ENCODE measurements at regions of chr13 and their contacts with region 1.

Region 1: GRCh38 chr13:101785858-101786257 is 333.4 kb downstream of the ITGBL1 start:
- ATAC-seq: peak in 6 of 8 experiments; percentile 52 to 100 (median 96)
- H3K4me3 ChIP-seq: no peak overlapping the region
- H3K27ac ChIP-seq: no peak overlapping the region
- H3K4me1 ChIP-seq: no peaks in the 10 kb centered on the region

Region 2: DNA sequence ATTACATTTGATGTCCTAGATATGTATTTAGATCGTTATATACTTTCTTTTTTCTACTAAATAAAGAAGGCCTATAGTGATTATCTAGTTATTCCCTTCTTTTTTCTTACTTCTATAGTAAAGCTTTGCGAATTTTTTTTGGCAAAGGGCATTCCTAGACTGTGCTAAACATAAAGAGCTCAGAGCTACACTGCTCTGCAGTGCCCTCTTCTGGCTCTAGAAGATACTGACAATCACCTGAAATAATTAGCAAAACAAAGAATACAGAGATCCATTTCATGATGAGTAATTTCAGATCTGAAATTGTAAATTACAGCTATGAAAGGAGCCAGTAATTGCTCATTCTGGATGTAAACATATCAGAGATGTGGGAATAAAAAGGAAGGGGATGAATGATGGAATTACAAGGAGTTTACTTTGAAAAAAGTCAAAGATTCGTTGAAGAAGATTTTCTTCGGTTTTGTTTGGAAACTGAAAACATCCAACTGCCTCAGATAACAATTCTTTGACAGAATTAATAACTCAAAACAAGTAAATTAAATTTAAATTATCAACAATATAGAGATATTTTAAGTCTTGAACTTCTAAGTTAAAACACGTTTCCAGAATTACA is 658.0 kb before region 1 on chr13:
- in situ Hi-C with region 1: loop called in 1 of 9 experiments (anchors 25 kb)
- ATAC-seq: peak; percentile 40 to 72 (median 51)
- H3K4me3 ChIP-seq: no peak overlapping the region
- H3K27ac ChIP-seq: no peak overlapping the region
- H3K4me1 ChIP-seq: no peaks in the 10 kb centered on the region

Region 3: GRCh38 chr13:101695870-101696516 is 89.9 kb before region 1 on chr13:
- in situ Hi-C with region 1: loop called in 1 of 9 experiments (anchors 25 kb)
- ATAC-seq: peak in 2 of 8 experiments; percentile 66 to 74
- H3K4me3 ChIP-seq: no peak overlapping the region
- H3K27ac ChIP-seq: no peak overlapping the region
- H3K4me1 ChIP-seq: no peaks in the 10 kb centered on the region

Region 4: GRCh38 chr13:101916108-101916757 is 130.4 kb after region 1 on chr13:
- in situ Hi-C with region 1: loop called in 4 of 9 experiments (anchors 10 to 25 kb)
- ATAC-seq: peak; percentile 72 to 90 (median 80)
- H3K4me3 ChIP-seq: peak overlapping the region; percentile 42 to 65 (median 51)
- H3K27ac ChIP-seq: no peak overlapping the region
- H3K4me1 ChIP-seq: peaks cover 9 to 15% of the 10 kb centered on the region in 2 donors

Region 5: GRCh38 chr13:102091231-102091630 is 305.4 kb after region 1 on chr13:
- in situ Hi-C with region 1: loop called in 1 of 9 experiments (anchors 25 kb)
- ATAC-seq: peak in 1 of 8 experiments; percentile 77
- H3K4me3 ChIP-seq: no peak overlapping the region
- H3K27ac ChIP-seq: no peak overlapping the region
- H3K4me1 ChIP-seq: no peaks in the 10 kb centered on the region

Region 6: GRCh38 chr13:102555917-102556553 is 770.2 kb after region 1 on chr13:
- in situ Hi-C with region 1: loop called in 1 of 9 experiments (anchors 25 kb)
- ATAC-seq: peak in 3 of 8 experiments; percentile 77 to 85 (median 77)
- H3K4me3 ChIP-seq: no peak overlapping the region
- H3K27ac ChIP-seq: no peak overlapping the region
- H3K4me1 ChIP-seq: no peaks in the 10 kb centered on the region